Activated naive CD4-positive, alpha-beta T cell treated with anti-CD3 and anti-CD28 coated beads for 36 hours (primary cell): ENCODE measurements at regions of chr4 and their contacts with region 1.

Region 1: DNA sequence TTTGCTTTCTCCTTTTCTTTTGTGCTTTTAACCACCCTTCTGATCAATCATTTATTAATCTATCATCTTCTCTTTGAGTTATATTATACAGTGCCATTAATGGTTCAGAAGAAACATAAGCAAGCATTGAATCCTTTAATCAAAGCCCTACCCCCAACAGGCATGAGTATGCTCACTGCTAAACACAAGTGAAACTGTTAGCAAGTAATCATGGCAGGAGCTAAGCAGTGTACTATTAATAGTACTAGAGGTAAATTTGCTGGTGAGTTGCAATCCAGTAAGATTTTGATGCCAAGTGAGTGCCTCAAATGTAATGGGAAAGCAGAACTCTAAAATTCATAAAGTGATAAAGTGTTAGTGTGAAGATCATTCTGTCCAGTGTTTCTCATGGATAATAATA is 57.2 kb downstream of the FNIP2 start:
- DNase-seq: no peak
- H3K4me3 Mint-ChIP-seq: no peak overlapping the region
- H3K27ac Mint-ChIP-seq: peak overlapping the region; percentile 59
- H3K4me1 Mint-ChIP-seq: peaks cover 55% of the 10 kb centered on the region
- H3K27me3 Mint-ChIP-seq: no peaks in the 10 kb centered on the region

Region 2: DNA sequence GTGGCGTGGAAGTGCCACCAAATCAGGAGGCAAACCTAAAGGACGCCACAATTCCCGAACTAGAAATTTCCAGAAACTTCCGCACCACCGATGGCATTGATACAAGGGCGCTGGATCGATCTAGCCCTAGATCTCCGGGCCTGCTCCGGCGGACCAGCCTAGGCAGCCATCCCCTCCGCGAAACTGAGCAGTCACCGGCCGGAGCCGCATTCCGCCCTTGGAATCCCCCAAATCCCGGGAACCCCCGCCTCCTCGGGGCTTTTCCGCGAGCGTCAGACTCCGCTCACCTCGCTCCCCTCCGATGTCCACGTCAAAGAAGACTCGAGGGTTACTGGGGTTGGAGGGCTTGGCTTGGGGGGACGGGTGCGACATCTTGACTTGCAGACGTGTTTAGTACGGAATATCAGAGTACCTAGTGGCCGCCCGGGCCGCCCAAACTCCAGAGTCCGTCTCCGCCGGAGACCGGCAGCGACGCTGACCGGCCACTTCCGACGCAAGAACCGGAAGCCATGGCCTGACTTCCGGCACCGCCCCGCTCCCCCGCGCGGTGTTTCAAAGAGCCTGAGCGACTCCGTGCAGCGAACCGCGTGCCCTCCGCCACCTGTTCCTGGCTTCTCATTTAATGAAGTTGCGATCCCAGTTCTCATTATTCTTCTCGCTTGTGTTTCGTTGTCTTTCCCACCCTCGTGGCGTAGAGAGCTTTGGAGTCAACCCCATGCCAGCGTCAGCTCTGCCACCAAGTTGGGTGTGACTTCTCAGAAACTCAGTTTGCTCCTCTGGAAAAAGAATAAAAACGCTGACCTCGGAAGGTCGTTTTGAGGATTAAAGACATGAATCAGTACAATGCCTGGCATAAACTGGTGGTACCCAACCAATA is 102.9 kb before region 1 on chr4 and contains the start of gene PPID:
- CTCF ChIA-PET with region 1: no interaction called
- intact Hi-C with region 1: loop called (anchors 5 kb)
- DNase-seq: peak; percentile 88
- H3K4me3 Mint-ChIP-seq: peak within 1 kb of the TSS; percentile 98
- H3K27ac Mint-ChIP-seq: peak within 1 kb of the TSS; percentile 99
- H3K4me1 Mint-ChIP-seq: peaks cover 41% of the 10 kb centered on the region
- H3K27me3 Mint-ChIP-seq: no peaks in the 10 kb centered on the region
- total RNA-seq, gene PPID: 55.4 to 55.6 TPM

Region 3: DNA sequence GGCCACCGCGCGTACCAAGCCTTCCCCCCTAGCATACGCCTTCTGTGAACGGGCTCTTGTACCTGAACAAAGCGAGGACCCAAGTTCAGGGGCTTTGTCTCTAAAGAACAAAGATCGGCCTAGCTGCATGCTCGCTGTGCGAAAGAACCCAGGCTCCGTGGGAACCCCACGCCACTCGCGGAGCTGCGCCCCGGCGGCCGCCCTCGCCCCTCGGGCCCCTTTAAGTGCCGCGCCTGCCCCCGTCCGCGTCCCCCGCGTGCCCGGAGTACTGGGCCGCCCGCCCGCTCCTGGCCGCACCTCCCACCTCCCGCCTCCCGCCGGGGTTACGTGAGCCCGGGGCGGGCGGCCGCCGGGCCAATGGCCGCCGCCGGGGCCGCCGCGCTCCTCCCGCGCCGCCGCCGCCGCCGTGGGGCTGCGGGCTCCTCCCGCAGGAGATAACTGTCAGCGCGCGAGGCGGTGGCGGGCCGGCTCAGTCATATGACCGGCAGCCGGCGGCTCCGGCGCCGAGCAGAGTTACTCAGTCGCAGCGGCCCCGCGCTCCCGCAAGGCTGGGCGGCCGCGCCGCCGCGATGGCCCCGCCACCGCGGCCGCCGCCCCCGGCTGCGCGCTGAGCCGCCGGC is 57.4 kb before region 1 on chr4 and contains the start of gene FNIP2:
- CTCF ChIA-PET with region 1: no interaction called
- intact Hi-C with region 1: loop called (anchors 1 kb)
- DNase-seq: peak; percentile 73
- H3K4me3 Mint-ChIP-seq: peak within 1 kb of the TSS; percentile 96
- H3K27ac Mint-ChIP-seq: peak within 1 kb of the TSS; percentile 90
- H3K4me1 Mint-ChIP-seq: peaks cover 39% of the 10 kb centered on the region
- H3K27me3 Mint-ChIP-seq: no peaks in the 10 kb centered on the region
- total RNA-seq, gene FNIP2: 10.1 to 11.3 TPM

Region 4: GRCh38 chr4:158778156-158778711 is 47.8 kb before region 1 on chr4:
- CTCF ChIA-PET with region 1: interaction called, 3 read pairs
- intact Hi-C with region 1: loop called (anchors 2 kb)
- DNase-seq: no peak
- H3K4me3 Mint-ChIP-seq: peak overlapping the region; percentile 27
- H3K27ac Mint-ChIP-seq: peak overlapping the region; percentile 31
- H3K4me1 Mint-ChIP-seq: peaks cover 31% of the 10 kb centered on the region
- H3K27me3 Mint-ChIP-seq: no peaks in the 10 kb centered on the region

Region 5: DNA sequence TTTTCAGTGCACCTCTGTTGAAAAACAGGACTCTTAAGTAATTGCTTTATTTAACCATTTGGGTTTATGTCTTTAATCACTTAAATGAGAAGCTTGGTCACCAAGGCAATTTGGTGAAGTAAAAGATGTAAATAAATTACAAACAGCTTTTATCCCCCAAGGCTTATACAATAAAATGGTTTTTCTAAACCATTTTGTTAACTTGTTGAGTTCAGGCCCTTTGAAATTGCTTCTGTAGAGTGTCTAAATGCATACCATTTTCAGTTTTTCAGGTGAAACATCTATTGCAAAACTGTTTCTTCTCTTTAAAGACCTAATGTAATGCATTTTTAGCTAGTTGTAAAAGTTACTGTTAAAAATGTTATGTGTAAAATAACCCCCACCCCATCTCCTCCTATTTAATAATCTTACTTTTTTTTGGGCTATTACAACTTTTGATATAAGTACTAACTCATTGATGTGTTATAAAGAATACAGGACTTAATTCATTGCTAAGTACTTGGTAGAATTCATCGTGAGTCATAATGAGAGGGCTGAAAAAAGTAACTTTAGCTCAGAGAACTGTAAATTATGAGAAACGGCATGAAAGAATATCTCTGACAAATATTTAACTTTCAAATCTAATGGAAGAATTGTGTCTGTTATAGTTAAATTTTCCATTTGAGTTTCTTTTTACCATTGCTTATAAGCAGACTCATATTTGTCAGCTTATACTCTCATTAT is 281.3 kb after region 1 on chr4:
- CTCF ChIA-PET with region 1: no interaction called
- intact Hi-C with region 1: no loop called
- DNase-seq: no peak
- H3K4me3 Mint-ChIP-seq: peak overlapping the region; percentile 76
- H3K27ac Mint-ChIP-seq: peak overlapping the region; percentile 91
- H3K4me1 Mint-ChIP-seq: peaks cover 58% of the 10 kb centered on the region
- H3K27me3 Mint-ChIP-seq: no peaks in the 10 kb centered on the region